GM12878 (cell line): ENCODE measurements at regions of chr10 and their contacts with region 1.

Region 1: GRCh38 chr10:100046021-100046486 is 35.6 kb downstream of the CPN1 start:
- DNase-seq: peak; percentile 50
- ATAC-seq: peak; percentile 96
- H3K4me3 ChIP-seq: no peak overlapping the region
- H3K27ac ChIP-seq: peak overlapping the region; percentile 31; the same call in 1 of the 2 replicates
- H3K4me1 ChIP-seq: peaks cover 29% of the 10 kb centered on the region
- H3K27me3 ChIP-seq: no peaks in the 10 kb centered on the region
- CTCF ChIP-seq: peak; percentile 90 to 95 (median 91)
- EP300 ChIP-seq: no peak
- POLR2A ChIP-seq: no peak
- RAD21 ChIP-seq: peak; percentile 95

Region 2: GRCh38 chr10:99806091-99806490 is 240.0 kb before region 1 on chr10:
- CTCF ChIA-PET with region 1: no interaction called
- POLR2A ChIA-PET with region 1: no interaction called
- RAD21 ChIA-PET with region 1: no interaction called
- SMC1A ChIA-PET with region 1: no interaction called
- in situ Hi-C with region 1: no loop called
- intact Hi-C with region 1: no loop called
- DNase-seq: no peak
- ATAC-seq: no peak
- H3K4me3 ChIP-seq: no peak overlapping the region
- H3K27ac ChIP-seq: no peak overlapping the region
- H3K4me1 ChIP-seq: no peaks in the 10 kb centered on the region
- H3K27me3 ChIP-seq: no peaks in the 10 kb centered on the region
- CTCF ChIP-seq: no peak
- EP300 ChIP-seq: no peak
- POLR2A ChIP-seq: no peak
- RAD21 ChIP-seq: no peak

Region 3: DNA sequence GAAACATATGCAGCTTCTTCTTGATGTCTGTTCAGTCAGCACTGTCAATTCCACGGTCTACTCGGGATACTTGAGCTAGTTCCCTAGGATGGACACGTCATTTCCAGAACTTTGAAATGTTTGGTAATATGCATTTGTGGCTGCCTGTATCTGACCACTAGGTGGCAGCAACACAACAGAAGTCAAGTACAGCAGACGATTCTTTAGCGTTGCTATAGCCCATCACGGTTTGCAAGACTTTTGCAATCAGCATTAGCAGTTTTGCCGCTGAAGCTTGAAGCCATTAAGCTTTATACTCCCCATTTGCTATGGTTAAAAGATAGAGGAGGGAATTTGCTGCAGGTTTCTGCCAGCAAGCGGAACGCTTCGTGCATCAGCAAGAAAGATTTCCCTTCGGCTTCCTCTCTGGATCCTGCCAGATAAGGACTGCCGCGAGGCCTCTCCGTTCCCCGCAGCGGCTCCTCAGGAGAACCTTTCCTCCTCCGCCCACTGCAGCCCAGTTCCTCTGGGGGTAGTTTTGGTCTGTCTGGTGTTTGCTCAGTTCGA is 200.1 kb before region 1 on chr10:
- CTCF ChIA-PET with region 1: interaction called, 340 read pairs
- POLR2A ChIA-PET with region 1: interaction called, 4 read pairs
- RAD21 ChIA-PET with region 1: interaction called, 152 read pairs
- SMC1A ChIA-PET with region 1: interaction called, 173 read pairs
- in situ Hi-C with region 1: loop called (anchors 5 kb)
- intact Hi-C with region 1: loop called (anchors 1 kb)
- DNase-seq: peak; percentile 59
- ATAC-seq: peak; percentile 95
- H3K4me3 ChIP-seq: 0 out of 2 replicates have a peak overlapping the region, but pooled peaks have one; percentile 34
- H3K27ac ChIP-seq: no peak overlapping the region
- H3K4me1 ChIP-seq: 0 out of 2 replicates have a peak, but pooled peaks cover 2% of the 10 kb centered on the region
- H3K27me3 ChIP-seq: no peaks in the 10 kb centered on the region
- CTCF ChIP-seq: peak; percentile 83 to 93 (median 89)
- EP300 ChIP-seq: no peak
- POLR2A ChIP-seq: no peak
- RAD21 ChIP-seq: peak; percentile 93

Region 4: DNA sequence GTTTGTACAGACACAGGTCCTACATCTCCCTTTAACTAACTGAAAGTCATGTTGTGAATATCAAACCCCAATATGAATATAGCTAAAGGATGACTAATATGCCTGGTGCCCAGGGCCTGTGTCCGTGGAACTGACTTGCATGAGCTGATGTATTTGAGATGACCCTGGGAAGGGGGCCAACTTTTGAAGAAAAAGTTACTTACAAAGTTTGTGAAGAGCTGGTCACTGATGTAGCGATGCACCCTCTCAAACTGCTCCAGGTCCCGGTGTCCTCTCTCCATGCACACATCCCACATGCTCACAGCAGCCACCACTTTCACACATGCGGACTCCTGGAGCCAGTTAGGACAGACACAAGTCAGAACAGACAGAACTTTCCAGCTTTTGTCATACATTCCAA is 157.4 kb before region 1 on chr10:
- CTCF ChIA-PET with region 1: interaction called, 11 read pairs
- POLR2A ChIA-PET with region 1: no interaction called
- RAD21 ChIA-PET with region 1: interaction called, 6 read pairs
- SMC1A ChIA-PET with region 1: interaction called, 5 read pairs
- in situ Hi-C with region 1: no loop called
- intact Hi-C with region 1: no loop called
- DNase-seq: no peak
- ATAC-seq: no peak
- H3K4me3 ChIP-seq: no peak overlapping the region
- H3K27ac ChIP-seq: no peak overlapping the region
- H3K4me1 ChIP-seq: no peaks in the 10 kb centered on the region
- H3K27me3 ChIP-seq: no peaks in the 10 kb centered on the region
- CTCF ChIP-seq: no peak
- EP300 ChIP-seq: no peak
- POLR2A ChIP-seq: no peak
- RAD21 ChIP-seq: no peak

Region 5: GRCh38 chr10:99976886-99977665 is 69.0 kb before region 1 on chr10:
- CTCF ChIA-PET with region 1: interaction called, 103 read pairs
- POLR2A ChIA-PET with region 1: interaction called, 3 read pairs
- RAD21 ChIA-PET with region 1: interaction called, 21 read pairs
- SMC1A ChIA-PET with region 1: interaction called, 66 read pairs
- in situ Hi-C with region 1: no loop called
- intact Hi-C with region 1: loop called (anchors 2 kb)
- DNase-seq: no peak
- ATAC-seq: no peak; the same call in 1 of the 3 replicates
- H3K4me3 ChIP-seq: no peak overlapping the region
- H3K27ac ChIP-seq: peak overlapping the region; percentile 94
- H3K4me1 ChIP-seq: peaks cover 70% of the 10 kb centered on the region
- H3K27me3 ChIP-seq: no peaks in the 10 kb centered on the region
- CTCF ChIP-seq: no peak
- EP300 ChIP-seq: no peak
- POLR2A ChIP-seq: no peak
- RAD21 ChIP-seq: no peak

Region 6: DNA sequence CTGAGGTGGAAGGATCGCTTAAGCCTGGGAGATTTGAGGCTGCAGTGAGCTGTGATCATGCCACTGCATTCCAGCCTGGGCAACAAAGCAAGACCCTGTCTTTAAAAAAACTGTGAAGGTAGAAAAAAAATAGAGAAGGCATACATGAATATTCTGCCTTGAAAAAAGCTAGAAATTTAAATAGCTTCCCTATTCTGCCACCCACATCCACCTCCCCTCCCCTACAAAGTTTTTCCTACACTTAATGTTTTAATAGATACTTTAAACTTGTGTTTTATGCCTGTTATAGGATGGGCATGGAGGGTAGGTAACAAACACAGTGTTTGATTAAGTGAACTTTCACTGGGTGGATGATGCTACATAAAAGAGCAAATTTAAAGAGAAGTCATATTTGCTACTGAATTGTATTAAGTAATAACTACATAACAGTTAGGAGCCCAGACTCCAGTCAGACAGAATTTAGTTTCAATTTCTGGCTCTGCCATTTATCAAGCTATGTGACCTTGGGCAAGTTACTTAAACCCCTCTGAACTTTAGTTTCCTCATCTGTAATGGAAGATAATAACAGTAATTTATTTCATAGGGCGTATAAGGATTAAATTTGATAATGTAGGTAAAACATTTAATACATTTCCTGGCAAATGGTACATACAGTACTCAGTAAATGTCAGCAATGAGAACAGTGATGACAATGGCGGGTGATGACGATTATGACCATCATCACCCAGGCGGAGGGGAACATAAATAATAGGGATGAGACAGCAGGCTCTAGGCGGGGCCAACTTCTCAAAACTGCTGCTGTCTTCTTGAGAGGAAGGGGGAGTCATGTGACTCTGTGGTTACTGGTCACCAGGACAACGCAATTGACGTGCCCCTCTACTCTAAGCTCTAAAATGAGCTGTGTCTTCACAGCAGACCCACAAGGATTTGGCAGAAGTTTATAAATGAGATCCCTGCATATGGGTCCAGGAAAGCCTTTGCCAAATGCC is 52.1 kb before region 1 on chr10:
- CTCF ChIA-PET with region 1: interaction called, 12 read pairs
- POLR2A ChIA-PET with region 1: no interaction called
- RAD21 ChIA-PET with region 1: interaction called, 5 read pairs
- SMC1A ChIA-PET with region 1: interaction called, 7 read pairs
- in situ Hi-C with region 1: no loop called
- intact Hi-C with region 1: no loop called
- DNase-seq: peak; percentile 51
- ATAC-seq: peak; percentile 98
- H3K4me3 ChIP-seq: peak overlapping the region; percentile 4; the same call in 1 of the 2 replicates
- H3K27ac ChIP-seq: peak overlapping the region; percentile 42
- H3K4me1 ChIP-seq: peaks cover 23% of the 10 kb centered on the region
- H3K27me3 ChIP-seq: no peaks in the 10 kb centered on the region
- CTCF ChIP-seq: no peak
- EP300 ChIP-seq: no peak
- POLR2A ChIP-seq: 0 out of 2 replicates have a peak, but pooled peaks have one; percentile 24
- RAD21 ChIP-seq: no peak

Region 7: GRCh38 chr10:100020142-100020885 is 25.7 kb before region 1 on chr10:
- CTCF ChIA-PET with region 1: interaction called, 33 read pairs
- POLR2A ChIA-PET with region 1: interaction called, 3 read pairs
- RAD21 ChIA-PET with region 1: interaction called, 28 read pairs
- SMC1A ChIA-PET with region 1: interaction called, 54 read pairs
- in situ Hi-C with region 1: no loop called
- intact Hi-C with region 1: no loop called
- DNase-seq: peak; percentile 87
- ATAC-seq: peak; percentile 92
- H3K4me3 ChIP-seq: peak overlapping the region; percentile 41; the same call in 1 of the 2 replicates
- H3K27ac ChIP-seq: peak overlapping the region; percentile 94
- H3K4me1 ChIP-seq: peaks cover 29% of the 10 kb centered on the region
- H3K27me3 ChIP-seq: no peaks in the 10 kb centered on the region
- CTCF ChIP-seq: peak in 2 of 3 experiments; percentile 28 to 44; a peak in 3 of 6 replicates
- EP300 ChIP-seq: peak in 1 of 2 experiments; percentile 31; a peak in 1 of 4 replicates
- POLR2A ChIP-seq: no peak
- RAD21 ChIP-seq: peak; percentile 56